ENCODE measurements at regions of chr5 and their contacts with region 1.

Region 1: GRCh38 chr5:20109320-20109719 is 121.3 kb upstream of the CDH18 start:
- DNase-seq: peak in 1 of 2 donors; percentile 53
- H3K4me3 ChIP-seq: no peak overlapping the region
- H3K27ac ChIP-seq: no peak overlapping the region
- H3K4me1 ChIP-seq: no peaks in the 10 kb centered on the region
- H3K27me3 ChIP-seq: no peaks in the 10 kb centered on the region
- CTCF ChIP-seq: no peak
- POLR2A ChIP-seq: no peak

Region 2: DNA sequence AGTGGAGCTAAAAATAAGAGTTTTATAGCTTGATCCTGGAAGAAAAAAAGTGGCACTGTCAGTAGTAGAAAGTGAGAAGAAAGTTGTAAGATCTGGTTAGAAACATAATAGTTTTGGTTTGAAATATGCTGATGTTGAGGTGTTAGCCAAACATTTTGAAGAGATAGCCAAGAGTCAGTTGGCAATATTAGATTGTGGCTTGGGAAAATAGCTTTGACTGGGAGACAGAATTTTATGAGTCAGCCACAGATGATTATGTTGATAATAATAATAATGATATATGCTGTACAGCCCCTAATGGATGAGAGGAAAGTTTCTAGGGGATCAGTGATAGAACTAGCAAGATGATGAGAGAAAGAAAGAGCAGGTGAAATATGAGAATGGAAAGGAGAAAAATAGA is 108.9 kb before region 1 on chr5:
- intact Hi-C with region 1: loop called (anchors 5 kb)
- DNase-seq: no peak
- H3K4me3 ChIP-seq: no peak overlapping the region
- H3K27ac ChIP-seq: no peak overlapping the region
- H3K4me1 ChIP-seq: no peaks in the 10 kb centered on the region
- H3K27me3 ChIP-seq: no peaks in the 10 kb centered on the region
- CTCF ChIP-seq: no peak
- POLR2A ChIP-seq: no peak

Region 3: GRCh38 chr5:21701317-21701716 is 1592.0 kb after region 1 on chr5:
- intact Hi-C with region 1: loop called (anchors 10 kb)
- DNase-seq: no peak
- H3K4me3 ChIP-seq: no peak overlapping the region
- H3K27ac ChIP-seq: no peak overlapping the region
- H3K4me1 ChIP-seq: no peaks in the 10 kb centered on the region
- H3K27me3 ChIP-seq: no peaks in the 10 kb centered on the region
- CTCF ChIP-seq: no peak
- POLR2A ChIP-seq: no peak